ENCODE measurements at regions of chr2 and their contacts with region 1.

Region 1: GRCh38 chr2:215693193-215693998 is 257.5 kb upstream of the FN1 start:
- DNase-seq: no peak
- H3K4me3 ChIP-seq: no peak overlapping the region
- H3K27ac ChIP-seq: peak overlapping the region; percentile 83
- H3K27me3 ChIP-seq: no peaks in the 10 kb centered on the region
- CTCF ChIP-seq: no peak

Region 2: GRCh38 chr2:215652388-215652787 is 41.0 kb before region 1 on chr2:
- CTCF ChIA-PET with region 1: no interaction called
- POLR2A ChIA-PET with region 1: interaction called, 13 read pairs
- DNase-seq: peak; percentile 79
- H3K4me3 ChIP-seq: no peak overlapping the region
- H3K27ac ChIP-seq: no peak overlapping the region
- H3K27me3 ChIP-seq: no peaks in the 10 kb centered on the region
- CTCF ChIP-seq: no peak

Region 3: DNA sequence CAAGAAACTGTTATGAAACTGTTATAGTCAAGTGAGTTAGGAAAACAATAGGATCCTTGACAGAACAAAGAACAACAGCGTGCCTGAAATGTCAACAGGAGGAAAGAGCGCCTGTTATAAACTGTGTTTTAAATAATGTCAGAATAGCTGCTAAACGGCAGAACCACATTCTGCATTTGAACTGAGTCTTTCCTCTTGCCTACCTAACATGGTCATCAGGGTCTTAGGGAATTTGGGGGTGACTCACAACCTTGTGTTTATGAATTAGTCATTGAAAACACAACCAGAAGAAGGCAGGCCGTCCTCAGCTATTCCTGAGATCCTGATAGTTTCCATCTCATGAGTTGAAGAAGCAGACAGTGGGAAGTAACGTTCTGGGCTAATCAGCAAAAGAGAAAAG is 35.6 kb before region 1 on chr2:
- CTCF ChIA-PET with region 1: no interaction called
- POLR2A ChIA-PET with region 1: interaction called, 17 read pairs
- DNase-seq: peak; percentile 97
- H3K4me3 ChIP-seq: no peak overlapping the region
- H3K27ac ChIP-seq: peak overlapping the region; percentile 59
- H3K27me3 ChIP-seq: no peaks in the 10 kb centered on the region
- CTCF ChIP-seq: peak; percentile 13; the same call in 1 of the 2 replicates

Region 4: GRCh38 chr2:215828517-215829184 is 135.3 kb after region 1 on chr2:
- CTCF ChIA-PET with region 1: no interaction called
- POLR2A ChIA-PET with region 1: no interaction called
- DNase-seq: no peak
- H3K4me3 ChIP-seq: no peak overlapping the region
- H3K27ac ChIP-seq: no peak overlapping the region
- H3K27me3 ChIP-seq: no peaks in the 10 kb centered on the region
- CTCF ChIP-seq: peak; percentile 59

Region 5: GRCh38 chr2:216283038-216283900 is 589.9 kb after region 1 on chr2:
- CTCF ChIA-PET with region 1: no interaction called
- POLR2A ChIA-PET with region 1: no interaction called
- DNase-seq: no peak
- H3K4me3 ChIP-seq: no peak overlapping the region
- H3K27ac ChIP-seq: no peak overlapping the region
- H3K27me3 ChIP-seq: no peaks in the 10 kb centered on the region
- CTCF ChIP-seq: 0 out of 2 replicates have a peak, but pooled peaks have one; percentile 11